ENCODE measurements at regions of chr9 and their contacts with region 1.

Region 1: GRCh38 chr9:125119643-125120286 is 23.6 kb downstream of the SCAI start:
- DNase-seq: no peak
- H3K4me3 ChIP-seq: no peak overlapping the region
- H3K27ac ChIP-seq: no peak overlapping the region
- H3K4me1 ChIP-seq: no peaks in the 10 kb centered on the region
- H3K27me3 ChIP-seq: no peaks in the 10 kb centered on the region
- CTCF ChIP-seq: no peak
- POLR2A ChIP-seq: no peak

Region 2: GRCh38 chr9:125061391-125061790 is 58.4 kb before region 1 on chr9:
- intact Hi-C with region 1: loop called (anchors 2 kb)
- DNase-seq: no peak
- H3K4me3 ChIP-seq: no peak overlapping the region
- H3K27ac ChIP-seq: no peak overlapping the region
- H3K4me1 ChIP-seq: no peaks in the 10 kb centered on the region
- H3K27me3 ChIP-seq: no peaks in the 10 kb centered on the region
- CTCF ChIP-seq: no peak
- POLR2A ChIP-seq: no peak

Region 3: GRCh38 chr9:125089331-125089730 is 30.4 kb before region 1 on chr9:
- intact Hi-C with region 1: no loop called
- DNase-seq: no peak
- H3K4me3 ChIP-seq: no peak overlapping the region
- H3K27ac ChIP-seq: no peak overlapping the region
- H3K4me1 ChIP-seq: no peaks in the 10 kb centered on the region
- H3K27me3 ChIP-seq: no peaks in the 10 kb centered on the region
- CTCF ChIP-seq: no peak
- POLR2A ChIP-seq: no peak

Measured in breast epithelium (tissue), 4 donors.